A673 (cell line): ENCODE measurements at regions of chr17 and their contacts with region 1.

Region 1: DNA sequence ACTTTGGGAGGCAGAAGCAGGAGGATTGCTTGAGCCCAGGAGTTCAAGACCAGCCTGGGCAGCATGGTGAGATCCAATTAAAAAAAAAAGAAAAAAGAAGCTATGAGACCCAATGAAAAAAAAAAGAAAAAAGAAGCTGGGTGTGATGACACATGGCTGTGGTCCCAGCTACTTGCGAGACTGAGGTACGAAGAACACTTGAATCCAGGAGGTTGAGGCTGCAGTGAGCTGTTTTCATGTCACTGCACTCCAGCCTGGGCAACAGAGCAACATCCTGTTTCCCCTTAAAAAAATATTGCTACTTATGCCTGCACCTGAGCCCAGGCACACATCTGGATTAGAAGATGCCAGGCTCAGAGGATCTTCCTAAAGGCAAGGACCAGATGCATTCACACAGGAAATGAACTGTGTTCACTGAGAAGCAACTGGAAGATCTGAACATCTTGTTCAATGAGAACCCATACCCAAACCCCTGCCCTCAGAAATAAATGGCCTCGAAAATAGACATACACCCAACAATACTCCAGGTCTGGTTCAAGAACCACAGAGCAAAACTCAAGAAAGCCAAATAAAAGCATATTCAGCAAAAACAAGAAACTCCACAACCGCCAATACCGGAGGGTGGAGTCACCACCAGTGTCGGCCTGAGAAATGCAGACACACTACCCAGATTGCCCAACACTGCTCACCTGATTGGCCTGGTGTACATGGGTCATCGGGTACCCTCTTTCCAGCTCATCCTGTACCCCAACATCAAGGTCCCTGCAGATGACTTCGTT is 4.4 kb downstream of the RNF135 start:
- DNase-seq: no peak
- H3K4me3 ChIP-seq: no peak overlapping the region
- H3K27ac ChIP-seq: no peak overlapping the region
- H3K4me1 ChIP-seq: no peaks in the 10 kb centered on the region
- H3K27me3 ChIP-seq: no peaks in the 10 kb centered on the region
- CTCF ChIP-seq: no peak

Region 2: GRCh38 chr17:30950669-30951399 is 24.4 kb before region 1 on chr17:
- CTCF ChIA-PET with region 1: no interaction called
- POLR2A ChIA-PET with region 1: no interaction called
- intact Hi-C with region 1: no loop called
- DNase-seq: peak; percentile 11
- H3K4me3 ChIP-seq: no peak overlapping the region
- H3K27ac ChIP-seq: no peak overlapping the region
- H3K4me1 ChIP-seq: no peaks in the 10 kb centered on the region
- H3K27me3 ChIP-seq: no peaks in the 10 kb centered on the region
- CTCF ChIP-seq: no peak

Region 3: DNA sequence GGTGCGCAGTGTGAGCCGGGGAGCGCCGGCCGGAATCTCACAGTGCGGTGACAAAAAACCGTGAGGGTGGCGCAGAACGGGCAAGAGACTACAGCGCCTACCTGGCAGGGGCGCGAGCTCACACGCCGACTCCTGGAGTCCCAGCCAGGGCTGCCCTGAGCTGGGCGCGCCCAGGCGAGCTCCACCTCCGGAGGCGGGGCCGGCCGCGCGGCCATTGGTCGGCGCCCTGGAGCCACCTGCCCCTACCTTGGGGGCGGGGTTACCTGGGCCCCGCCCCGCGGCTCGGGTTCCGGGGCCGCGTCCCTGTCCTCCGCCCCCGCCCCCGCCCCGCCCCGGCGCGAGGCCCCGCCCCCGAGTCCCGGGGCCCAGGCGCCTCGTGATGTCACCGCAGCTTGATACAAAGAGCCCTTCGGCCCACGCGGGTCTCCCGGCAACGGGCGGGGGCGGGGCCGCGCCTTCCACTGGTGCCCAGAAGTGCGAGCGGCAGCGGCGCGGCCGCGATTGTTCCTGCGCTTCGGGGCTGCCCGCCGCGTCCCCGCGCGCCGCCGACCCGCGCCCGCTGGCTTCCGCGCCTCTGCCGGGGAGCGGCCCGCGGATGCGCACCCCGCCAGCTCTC is 512.5 kb after region 1 on chr17:
- CTCF ChIA-PET with region 1: no interaction called
- POLR2A ChIA-PET with region 1: interaction called, 11 read pairs
- intact Hi-C with region 1: no loop called
- DNase-seq: peak; percentile 71
- H3K4me3 ChIP-seq: peak overlapping the region; percentile 46
- H3K27ac ChIP-seq: no peak overlapping the region
- H3K4me1 ChIP-seq: no peaks in the 10 kb centered on the region
- H3K27me3 ChIP-seq: no peaks in the 10 kb centered on the region
- CTCF ChIP-seq: no peak